ENCODE measurements at regions of chr16 and their contacts with region 1.

Region 1: GRCh38 chr16:24504472-24505345 is 34.7 kb upstream of the RBBP6 start:
- DNase-seq: no peak
- H3K4me3 ChIP-seq: no peak overlapping the region
- CTCF ChIP-seq: peak; percentile 66

Region 2: GRCh38 chr16:23803591-23804123 is 701.1 kb before region 1 on chr16:
- CTCF ChIA-PET with region 1: interaction called, 21 read pairs
- POLR2A ChIA-PET with region 1: no interaction called
- DNase-seq: no peak
- H3K4me3 ChIP-seq: no peak overlapping the region
- CTCF ChIP-seq: peak; percentile 33

Region 3: DNA sequence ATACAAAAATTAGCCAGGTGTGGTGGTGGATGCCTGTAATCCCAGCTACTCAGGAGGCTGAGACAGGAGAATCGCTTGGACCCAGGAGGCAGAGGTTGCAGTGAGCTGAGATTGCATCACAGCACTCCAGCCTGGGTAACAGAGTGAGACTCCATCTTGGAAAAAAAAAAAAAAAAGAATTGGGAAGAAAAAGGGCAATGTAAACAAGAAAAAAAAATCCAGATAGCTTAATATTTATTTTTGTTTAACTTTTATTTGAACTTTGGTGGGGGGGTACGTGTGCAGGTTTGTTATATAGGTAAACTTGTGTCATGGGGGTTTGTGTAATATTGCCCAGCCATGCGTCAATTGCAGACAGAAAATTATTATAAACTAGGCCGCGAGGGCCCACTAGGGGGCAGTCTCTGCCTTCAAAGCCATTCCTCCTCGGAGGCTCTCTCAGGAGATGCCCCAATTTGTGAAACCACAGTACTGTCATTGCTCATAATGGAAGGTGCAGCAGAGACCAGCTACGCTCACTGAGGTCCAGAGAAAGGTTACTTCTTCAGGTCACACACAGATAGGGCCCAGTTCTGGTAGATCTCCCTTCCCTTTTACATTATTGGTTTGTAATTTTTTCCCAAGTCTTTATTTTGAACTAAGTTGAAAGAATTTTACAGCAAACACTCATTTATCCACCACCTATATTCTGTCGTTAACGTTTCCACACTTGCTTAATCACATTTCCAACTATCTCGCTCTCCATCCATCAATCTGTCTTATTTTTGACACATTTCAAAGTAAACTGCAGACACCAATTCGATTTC is 462.7 kb before region 1 on chr16:
- CTCF ChIA-PET with region 1: interaction called, 257 read pairs
- POLR2A ChIA-PET with region 1: no interaction called
- DNase-seq: no peak
- H3K4me3 ChIP-seq: no peak overlapping the region
- CTCF ChIP-seq: peak; percentile 61

Region 4: DNA sequence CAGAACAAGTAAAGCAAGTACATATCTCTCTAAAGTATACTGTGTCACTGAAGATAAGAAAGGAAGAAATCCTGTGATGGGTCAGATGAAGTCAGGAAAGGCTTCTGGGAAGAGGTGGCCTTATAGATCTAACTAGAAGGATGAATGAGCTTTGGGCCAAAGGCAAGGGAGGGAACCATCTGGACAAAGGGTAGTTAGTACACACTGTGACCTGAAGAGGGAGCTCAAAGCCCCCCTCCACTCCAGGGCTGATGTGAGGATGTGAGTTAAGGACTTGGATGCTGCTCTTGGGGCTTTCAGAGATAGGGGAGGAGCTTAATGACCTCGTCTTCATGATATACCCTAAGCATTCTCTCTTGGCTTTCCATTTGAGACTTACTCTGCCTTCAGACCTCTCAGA is 433.9 kb before region 1 on chr16:
- CTCF ChIA-PET with region 1: interaction called, 11 read pairs
- POLR2A ChIA-PET with region 1: no interaction called
- DNase-seq: no peak
- H3K4me3 ChIP-seq: no peak overlapping the region
- CTCF ChIP-seq: peak; percentile 12

Region 5: DNA sequence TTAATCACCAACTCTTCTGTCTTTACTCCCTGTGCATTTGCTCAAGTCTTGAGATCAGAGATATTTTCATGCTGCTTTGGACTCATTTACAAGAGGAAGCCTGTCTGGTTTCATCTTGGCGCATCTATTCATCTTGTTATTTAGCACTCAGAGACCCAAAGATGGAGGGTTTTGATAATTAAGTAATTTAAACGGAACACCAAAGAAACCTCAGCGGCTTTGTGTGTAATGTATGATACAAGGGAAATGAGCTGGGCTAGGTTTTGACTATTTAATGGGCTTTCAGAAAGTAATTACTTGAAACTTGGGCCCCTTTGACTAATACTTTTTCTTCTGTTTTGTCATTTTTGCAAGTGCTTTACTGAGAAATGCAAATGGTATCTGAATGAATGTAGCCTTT is 314.8 kb before region 1 on chr16:
- CTCF ChIA-PET with region 1: no interaction called
- POLR2A ChIA-PET with region 1: no interaction called
- DNase-seq: no peak
- H3K4me3 ChIP-seq: no peak overlapping the region
- CTCF ChIP-seq: no peak

Region 6: DNA sequence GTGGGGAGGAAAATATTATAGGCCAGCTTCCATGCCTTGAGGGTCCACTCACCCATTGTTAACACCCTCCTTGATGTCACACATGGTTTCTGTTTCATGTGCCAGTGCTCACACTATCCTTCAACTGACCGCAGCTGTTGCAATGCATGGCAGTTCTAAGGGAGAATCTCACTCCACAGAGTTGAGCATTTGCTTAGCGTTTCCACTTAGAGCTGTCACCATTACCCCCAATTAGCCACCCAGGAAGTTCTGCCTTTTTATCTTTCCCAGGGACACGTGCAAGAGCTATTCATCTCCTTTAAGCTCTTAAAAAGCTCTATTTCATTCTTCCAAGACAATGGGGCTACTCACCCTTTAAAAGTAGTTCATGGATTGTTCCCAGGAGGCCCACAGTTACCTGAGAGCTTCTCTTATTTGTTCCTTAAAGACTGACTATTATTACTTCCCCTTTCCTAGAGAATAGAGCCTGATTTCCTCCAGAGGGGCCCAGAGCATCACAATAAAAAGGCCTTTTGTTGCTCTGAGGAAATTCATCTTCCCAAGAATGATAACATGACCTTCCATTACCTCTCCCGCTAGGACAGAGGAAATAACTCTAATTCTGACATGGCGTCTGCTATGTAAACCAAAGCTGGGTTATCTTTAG is 121.8 kb before region 1 on chr16:
- CTCF ChIA-PET with region 1: no interaction called
- POLR2A ChIA-PET with region 1: no interaction called
- DNase-seq: no peak
- H3K4me3 ChIP-seq: no peak overlapping the region
- CTCF ChIP-seq: no peak

Region 7: DNA sequence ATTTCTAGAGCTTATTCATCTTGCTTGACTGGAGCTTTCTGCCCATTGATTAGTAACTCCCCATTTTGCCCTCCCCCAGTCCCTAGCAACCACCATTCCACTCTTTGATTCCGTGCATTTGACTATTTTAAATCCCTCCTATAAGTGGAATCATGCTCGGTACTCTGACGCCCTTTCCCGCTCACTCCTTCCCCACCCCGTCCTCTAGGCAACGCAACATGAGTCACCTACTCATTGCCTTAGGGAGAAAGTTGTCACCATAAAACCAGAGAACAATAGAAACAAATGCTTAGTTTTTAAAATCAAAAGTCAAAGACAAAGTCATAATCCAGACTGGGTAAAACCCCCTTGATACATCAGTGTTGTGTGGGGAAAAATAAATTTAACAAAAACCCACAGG is 10.8 kb before region 1 on chr16:
- CTCF ChIA-PET with region 1: interaction called, 12 read pairs
- POLR2A ChIA-PET with region 1: interaction called, 3 read pairs
- DNase-seq: no peak
- H3K4me3 ChIP-seq: no peak overlapping the region
- CTCF ChIP-seq: no peak

Region 8: DNA sequence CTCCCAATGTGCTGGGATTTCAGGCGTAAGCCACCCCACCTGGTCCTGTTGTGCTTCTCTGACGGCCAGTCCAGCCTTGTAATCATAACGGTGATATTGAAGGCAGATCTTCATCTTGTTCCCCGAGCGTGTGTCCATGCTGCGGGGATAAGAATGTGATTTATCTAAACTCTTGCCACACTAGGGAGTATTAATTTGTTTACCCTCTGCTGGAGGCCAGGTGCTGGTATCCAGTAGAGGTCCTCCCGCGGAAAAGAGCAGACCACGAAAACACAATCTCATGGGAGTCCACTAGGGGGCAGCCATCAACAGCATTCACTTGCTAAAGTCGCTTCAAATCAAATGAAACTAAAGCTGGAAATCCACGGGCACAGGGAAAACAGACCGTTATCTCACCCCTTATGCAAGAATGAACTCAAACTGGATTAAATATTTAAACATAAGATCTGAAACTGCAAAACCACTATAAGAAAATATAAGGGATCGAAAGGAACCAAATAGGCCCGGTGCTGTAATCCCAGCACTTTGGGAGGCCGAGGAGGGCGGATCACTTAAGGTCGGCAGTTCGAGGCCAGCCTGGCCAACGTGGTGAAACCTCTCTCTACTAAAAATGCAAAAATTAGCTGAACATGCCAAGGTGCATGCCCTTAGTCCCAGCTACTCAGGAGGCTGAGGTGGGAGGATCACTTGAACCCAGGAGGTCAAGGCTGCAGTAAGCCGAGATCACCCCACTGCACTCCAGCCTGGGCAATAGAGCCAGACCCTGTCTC is 12.4 kb after region 1 on chr16:
- CTCF ChIA-PET with region 1: interaction called, 47 read pairs
- POLR2A ChIA-PET with region 1: no interaction called
- DNase-seq: peak; percentile 31
- H3K4me3 ChIP-seq: no peak overlapping the region
- CTCF ChIP-seq: peak; percentile 86

Region 9: GRCh38 chr16:24589997-24590396 is 85.3 kb after region 1 on chr16:
- CTCF ChIA-PET with region 1: no interaction called
- POLR2A ChIA-PET with region 1: no interaction called
- DNase-seq: no peak
- H3K4me3 ChIP-seq: no peak overlapping the region
- CTCF ChIP-seq: no peak

Region 10: DNA sequence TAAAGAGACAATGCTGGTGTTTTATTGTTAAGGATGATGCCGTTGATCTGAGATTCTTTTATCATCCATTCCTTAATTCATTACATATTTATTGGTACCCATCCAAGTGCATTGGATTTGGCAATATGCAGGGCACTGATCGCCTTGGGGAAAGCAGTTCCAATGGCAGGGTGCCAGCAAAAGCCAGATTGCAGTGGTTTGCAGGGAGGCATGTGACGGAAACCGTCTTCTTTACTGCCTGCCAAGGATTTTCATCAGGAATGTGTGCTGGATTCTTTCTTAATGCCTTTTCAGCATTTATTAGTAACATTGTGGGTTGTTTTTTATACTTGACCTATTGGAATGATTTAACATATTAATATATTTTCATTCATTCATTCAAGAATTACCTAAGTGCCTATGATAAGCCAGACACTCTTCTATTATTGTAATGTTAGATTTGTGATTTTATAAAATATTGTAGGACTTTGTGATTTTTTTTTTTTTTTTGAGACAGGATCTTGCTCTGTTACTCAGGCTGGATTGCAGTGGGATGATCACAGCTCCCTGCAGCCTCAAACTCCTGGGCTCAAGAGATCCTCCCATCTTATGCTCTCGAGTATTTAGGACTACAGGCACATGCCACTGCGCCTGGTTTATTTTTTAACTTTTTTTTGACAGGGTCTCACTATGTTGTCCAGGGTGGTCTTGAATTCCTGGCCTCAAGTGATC is 131.3 kb after region 1 on chr16:
- CTCF ChIA-PET with region 1: no interaction called
- POLR2A ChIA-PET with region 1: no interaction called
- DNase-seq: peak; percentile 87
- H3K4me3 ChIP-seq: no peak overlapping the region
- CTCF ChIP-seq: no peak